Dendritic cell treated with granulocyte-macrophage colony-stimulating factor and Interleukin-4, amounts not matched to agents 40 ng/mL and 50 ng/mL, for 4 days (primary cell): ENCODE measurements at regions of chr14 and their contacts with region 1.

Region 1: DNA sequence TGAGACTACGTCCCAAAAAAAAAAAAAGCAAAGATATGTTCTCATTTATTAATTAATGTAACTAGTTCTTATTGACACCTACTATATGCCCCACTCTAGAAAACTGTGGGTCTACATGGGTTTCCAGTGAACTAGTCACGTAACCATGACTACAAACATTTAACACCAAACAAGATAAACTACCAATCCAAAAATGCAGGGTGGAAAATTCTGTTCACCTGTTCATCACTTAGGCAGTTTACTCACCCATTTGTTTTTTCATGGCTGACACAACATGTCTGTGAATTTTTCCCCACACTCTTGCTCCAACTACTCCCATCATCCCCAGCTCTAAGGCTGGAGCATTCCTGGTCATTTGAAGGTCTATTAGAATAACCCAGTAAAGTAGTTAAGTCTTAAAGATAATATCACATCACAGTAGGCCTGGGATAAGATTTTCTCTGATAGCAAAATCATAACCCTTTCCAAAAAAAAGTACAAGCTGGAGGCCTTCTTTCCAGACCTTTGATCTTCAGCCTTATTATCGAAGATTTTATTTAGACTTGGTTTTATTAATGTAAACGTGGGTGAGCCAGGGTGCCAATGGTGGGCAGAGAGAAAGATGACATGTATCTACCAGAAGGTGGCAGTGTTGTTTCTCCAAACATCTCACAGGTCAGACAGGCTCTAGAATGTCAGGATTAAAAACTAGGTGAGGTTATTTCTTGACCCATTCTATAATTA is 61.6 kb upstream of the DAAM1 start:
- H3K4me3 Mint-ChIP-seq: no peak overlapping the region
- H3K27ac Mint-ChIP-seq: no peak overlapping the region
- H3K4me1 Mint-ChIP-seq: no peaks in the 10 kb centered on the region
- H3K27me3 Mint-ChIP-seq: no peaks in the 10 kb centered on the region

Region 2: GRCh38 chr14:59439256-59439965 is 312.5 kb after region 1 on chr14:
- intact Hi-C with region 1: loop called (anchors 1 kb)
- H3K4me3 Mint-ChIP-seq: no peak overlapping the region
- H3K27ac Mint-ChIP-seq: no peak overlapping the region
- H3K4me1 Mint-ChIP-seq: peaks cover 65% of the 10 kb centered on the region
- H3K27me3 Mint-ChIP-seq: no peaks in the 10 kb centered on the region

Region 3: GRCh38 chr14:59576332-59577294 is 449.7 kb after region 1 on chr14 and contains the start of gene CCDC175:
- intact Hi-C with region 1: loop called (anchors 2 kb)
- H3K4me3 Mint-ChIP-seq: peak within 1 kb of the TSS; percentile 72
- H3K27ac Mint-ChIP-seq: no peak within 1 kb of the TSS
- H3K4me1 Mint-ChIP-seq: no peaks in the 10 kb centered on the region
- H3K27me3 Mint-ChIP-seq: peaks cover 18% of the 10 kb centered on the region